Body of pancreas (tissue), 4 donors: ENCODE measurements at regions of chr4 and their contacts with region 1.

Region 1: DNA sequence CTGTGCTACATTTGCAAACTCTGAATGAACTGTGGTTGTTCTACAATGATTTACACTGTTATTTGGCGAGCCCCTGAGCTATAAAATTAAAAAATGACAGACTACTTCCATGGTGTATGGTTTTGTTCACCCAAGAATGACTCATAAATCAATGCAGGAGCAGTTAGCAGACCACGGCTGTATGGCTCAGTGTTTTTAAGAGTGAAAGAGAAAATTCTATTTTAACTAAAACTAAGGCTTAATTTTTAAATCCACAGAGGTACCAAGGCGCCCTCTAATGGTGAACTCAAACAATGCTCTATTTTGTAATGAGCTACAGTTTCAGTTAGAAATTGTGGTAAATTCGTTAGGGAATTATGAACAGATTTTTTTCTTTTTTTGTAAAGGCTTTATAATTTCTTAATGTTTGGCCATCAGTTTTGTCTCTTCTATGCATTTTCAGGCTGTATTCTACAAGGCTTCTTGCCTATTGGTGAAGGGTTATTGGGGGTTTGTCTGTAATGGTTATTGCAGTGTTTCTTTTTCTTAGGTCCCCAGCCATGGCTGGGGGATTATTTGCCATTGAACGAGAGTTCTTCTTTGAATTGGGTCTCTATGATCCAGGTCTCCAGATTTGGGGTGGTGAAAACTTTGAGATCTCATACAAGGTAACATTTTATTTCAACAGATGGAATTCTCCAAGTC is 32.5 kb downstream of the HMGB2 start:
- DNase-seq: peak in 1 of 4 donors; percentile 17
- ATAC-seq: no peak
- H3K4me3 ChIP-seq: no peak overlapping the region
- H3K27ac ChIP-seq: no peak overlapping the region
- H3K4me1 ChIP-seq: no peaks in the 10 kb centered on the region
- H3K27me3 ChIP-seq: no peaks in the 10 kb centered on the region
- CTCF ChIP-seq: peak; percentile 53 to 76 (median 73)
- POLR2A ChIP-seq: no peak

Region 2: DNA sequence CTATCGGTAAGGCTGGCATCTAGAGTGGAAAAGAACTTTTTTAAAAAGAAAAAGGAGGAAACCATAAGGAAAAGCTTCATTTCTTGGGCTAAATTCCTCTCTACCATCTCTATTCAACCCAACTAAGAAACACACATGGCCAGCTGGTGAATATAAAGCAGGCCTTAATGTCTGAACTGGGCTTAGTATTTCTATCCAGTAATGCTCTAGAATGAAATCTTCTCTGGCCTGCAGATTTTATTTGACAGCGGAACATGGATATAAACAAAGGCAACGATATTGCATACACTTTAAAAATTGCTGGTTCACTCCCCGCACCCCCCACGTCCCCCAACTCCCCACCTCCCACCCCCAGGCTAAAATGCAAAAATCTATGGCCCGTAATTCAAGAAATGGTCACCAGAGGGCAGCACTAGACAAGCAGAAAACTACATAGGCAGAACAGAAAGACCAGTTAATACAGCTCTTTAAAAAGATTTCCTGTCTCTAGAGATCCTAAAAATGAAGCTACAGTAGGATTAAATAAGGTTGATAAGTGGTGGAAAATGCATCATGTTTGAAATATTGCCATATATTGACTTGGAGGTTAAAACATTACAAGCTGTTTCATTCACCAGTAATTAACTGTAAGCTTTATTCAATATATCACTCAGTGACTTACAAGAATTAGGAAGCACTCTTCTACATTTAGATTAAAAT is 288.3 kb before region 1 on chr4:
- intact Hi-C with region 1: loop called (anchors 10 kb)
- DNase-seq: peak; percentile 34 to 58 (median 52)
- ATAC-seq: peak; percentile 62
- H3K4me3 ChIP-seq: no peak overlapping the region
- H3K27ac ChIP-seq: no peak overlapping the region
- H3K4me1 ChIP-seq: no peaks in the 10 kb centered on the region
- H3K27me3 ChIP-seq: no peaks in the 10 kb centered on the region
- CTCF ChIP-seq: peak; percentile 61 to 86 (median 67)
- POLR2A ChIP-seq: no peak

Region 3: GRCh38 chr4:173573286-173573685 is 271.6 kb after region 1 on chr4:
- intact Hi-C with region 1: no loop called
- DNase-seq: no peak
- ATAC-seq: no peak
- H3K4me3 ChIP-seq: no peak overlapping the region
- H3K27ac ChIP-seq: no peak overlapping the region
- H3K4me1 ChIP-seq: no peaks in the 10 kb centered on the region
- H3K27me3 ChIP-seq: no peaks in the 10 kb centered on the region
- CTCF ChIP-seq: no peak
- POLR2A ChIP-seq: no peak